Posterior vena cava (tissue), 2 donors: ENCODE measurements at regions of chr17 and their contacts with region 1.

Region 1: GRCh38 chr17:46108550-46109110 is 84.6 kb downstream of the KANSL1 start:
- DNase-seq: no peak

Region 2: DNA sequence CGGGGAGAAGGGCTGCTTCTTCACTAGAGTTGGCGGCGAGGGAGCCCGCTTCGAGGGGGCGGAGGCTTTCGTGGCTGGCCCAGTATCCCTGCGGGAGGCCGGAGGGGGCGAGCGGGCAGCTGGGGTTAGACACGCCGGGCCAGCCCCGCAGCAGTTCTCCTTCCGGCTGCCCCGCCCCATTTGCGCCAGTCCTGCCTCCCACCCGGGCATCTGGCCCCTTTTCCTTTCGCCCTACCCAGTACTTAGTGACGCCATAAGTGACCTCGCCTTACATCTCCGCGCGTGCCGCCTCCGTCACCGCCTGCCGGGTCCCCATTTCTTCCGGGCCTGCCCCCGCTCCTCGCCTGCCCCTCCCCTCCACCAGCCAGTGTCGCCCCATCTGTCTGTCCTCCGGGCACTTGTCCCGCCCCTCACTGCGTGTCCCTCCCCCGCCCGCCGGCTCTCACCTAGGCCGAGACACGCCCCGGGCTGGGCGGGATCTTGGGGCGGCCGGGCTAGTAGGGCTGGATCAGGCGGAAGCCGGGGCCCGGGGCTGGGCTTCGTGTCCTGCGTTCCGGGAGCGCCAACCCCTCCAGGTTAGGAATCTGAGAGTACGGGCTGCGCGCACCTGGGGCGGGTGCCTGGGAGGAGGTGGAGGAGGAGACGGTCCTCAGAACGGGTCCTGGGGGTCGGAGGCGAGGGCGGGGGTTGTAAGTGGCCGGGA is 861.0 kb before region 1 on chr17:
- intact Hi-C with region 1: loop called in 1 of 2 experiments (anchors 5 kb)
- DNase-seq: peak; percentile 93

Region 3: DNA sequence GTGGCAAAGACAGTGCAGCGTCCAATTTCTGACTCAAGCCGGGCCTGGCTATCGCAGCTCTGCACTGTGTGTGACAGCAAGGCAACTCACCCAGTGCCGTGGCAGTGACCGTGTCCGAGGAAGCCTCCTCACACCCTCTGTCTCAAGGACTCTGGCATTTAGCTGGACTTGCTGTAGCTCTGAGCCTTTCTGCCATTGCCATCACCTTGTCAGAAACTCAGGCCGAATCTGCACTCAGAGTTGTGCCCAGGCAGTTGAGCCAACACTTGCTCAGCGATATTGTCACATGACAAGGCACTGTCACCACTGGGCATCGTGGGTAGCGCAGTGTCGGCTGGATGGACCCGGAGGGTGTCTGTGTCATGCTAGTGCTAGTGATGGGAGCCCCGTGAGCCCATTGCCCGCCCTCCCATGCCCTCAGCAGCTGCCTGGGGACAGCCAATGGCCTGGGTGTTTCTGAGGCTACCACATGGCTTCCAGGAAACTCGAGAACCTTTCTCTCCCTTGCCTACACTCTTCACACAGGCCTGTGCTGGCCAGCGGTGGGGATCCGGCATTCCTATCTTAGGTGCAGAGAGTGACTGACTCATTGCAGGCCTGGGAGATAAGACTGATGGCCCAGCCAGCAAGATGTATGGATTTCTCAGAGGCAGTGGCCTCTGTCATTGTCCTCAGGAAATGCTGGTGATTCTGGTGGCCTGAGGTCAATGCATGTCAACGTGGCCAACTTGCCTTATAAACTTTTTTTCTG is 131.7 kb before region 1 on chr17:
- intact Hi-C with region 1: no loop called
- DNase-seq: peak; percentile 70

Region 4: GRCh38 chr17:46157443-46158062 is 48.9 kb after region 1 on chr17:
- intact Hi-C with region 1: loop called in 1 of 2 experiments (anchors 5 kb)
- DNase-seq: no peak

Region 5: DNA sequence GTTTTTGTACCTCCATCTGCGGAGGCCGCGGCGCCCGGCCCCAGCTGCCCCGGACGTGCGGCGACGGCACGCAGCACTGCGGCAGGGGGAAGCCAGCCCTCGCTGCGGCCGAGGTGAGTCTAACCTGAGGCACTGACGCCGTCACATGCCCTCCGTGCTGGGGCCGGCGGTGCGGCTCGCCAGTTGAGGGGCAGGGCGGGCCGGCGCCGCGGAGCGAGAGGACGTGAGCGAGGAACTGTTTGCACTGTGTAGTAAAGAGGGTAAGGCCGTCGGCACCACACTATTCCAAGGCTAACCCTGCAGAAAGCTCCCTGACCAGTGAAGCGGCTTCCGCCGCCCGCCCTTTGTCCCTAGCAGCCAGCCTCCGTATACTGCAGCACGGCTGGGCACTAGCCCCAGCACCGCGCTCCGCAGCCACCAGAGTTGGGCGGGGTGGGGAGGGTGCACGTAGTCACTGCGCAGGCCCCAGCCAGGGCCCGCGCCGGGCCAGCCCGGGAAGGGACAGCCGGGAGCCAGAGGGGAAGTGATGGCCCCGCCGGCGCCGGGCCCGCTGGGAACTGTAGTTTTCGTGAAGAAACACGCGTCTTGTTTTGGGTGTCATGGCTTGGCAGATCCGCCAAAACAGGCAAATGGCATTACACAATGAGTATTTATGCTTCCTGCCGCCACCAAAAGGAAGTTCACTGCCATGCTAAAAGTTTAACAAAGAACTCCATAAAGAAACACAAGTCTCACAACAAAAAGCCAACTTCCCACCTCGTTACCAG is 85.2 kb after region 1 on chr17:
- intact Hi-C with region 1: loop called in 1 of 2 experiments (anchors 10 kb)
- DNase-seq: peak; percentile 100